ENCODE measurements at regions of chr9 and their contacts with region 1.

Region 1: GRCh38 chr9:116661037-116661954 is 25.8 kb upstream of the TRIM32 start:
- DNase-seq: peak; percentile 58
- H3K4me3 ChIP-seq: no peak overlapping the region
- H3K27ac ChIP-seq: no peak overlapping the region
- H3K4me1 ChIP-seq: no peaks in the 10 kb centered on the region
- H3K27me3 ChIP-seq: no peaks in the 10 kb centered on the region
- CTCF ChIP-seq: peak; percentile 51 to 59
- POLR2A ChIP-seq: no peak

Region 2: DNA sequence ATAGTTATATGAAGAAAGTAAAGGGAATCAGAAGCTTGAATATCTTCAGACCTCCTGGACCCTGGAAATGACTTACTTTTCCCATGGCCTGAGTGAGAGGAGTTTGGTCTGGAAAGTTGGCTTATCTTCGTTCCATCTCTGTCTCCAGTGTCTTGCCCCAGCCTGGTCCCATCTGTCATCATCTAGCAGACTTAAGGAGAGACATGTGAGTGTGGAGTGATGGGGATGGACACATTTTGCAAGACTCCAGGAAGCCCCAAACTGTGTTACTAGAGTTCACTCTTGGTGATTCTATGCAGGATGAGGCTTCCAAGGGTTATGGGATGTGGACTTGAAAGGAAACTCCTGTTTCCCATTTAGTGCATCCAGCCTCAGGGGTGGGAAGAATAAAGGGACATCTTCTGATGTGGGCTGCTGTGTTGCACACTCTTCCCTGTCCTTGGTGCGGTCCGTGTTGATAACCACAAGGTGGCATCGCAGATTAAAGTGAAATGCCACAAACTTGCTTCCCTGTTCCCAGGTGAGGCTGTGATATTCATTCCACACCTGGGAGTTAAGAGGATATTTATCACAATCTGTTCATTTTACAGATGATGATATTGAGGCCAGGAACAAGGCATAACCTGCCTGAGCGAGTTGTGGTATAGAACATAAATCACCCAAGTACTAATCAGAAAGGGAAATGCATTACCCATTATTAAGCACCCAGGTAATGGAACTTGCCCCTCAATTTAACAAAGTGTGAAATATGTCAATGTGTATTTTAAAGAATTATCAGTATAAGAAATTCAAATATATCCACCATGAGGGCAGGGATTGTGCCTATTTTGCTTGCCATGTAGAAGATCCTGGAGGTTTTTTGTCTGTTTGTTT is 777.6 kb before region 1 on chr9:
- CTCF ChIA-PET with region 1: no interaction called
- POLR2A ChIA-PET with region 1: no interaction called
- dilution Hi-C with region 1: no loop called
- intact Hi-C with region 1: loop called (anchors 5 kb)
- DNase-seq: peak; percentile 9
- H3K4me3 ChIP-seq: no peak overlapping the region
- H3K27ac ChIP-seq: no peak overlapping the region
- H3K4me1 ChIP-seq: no peaks in the 10 kb centered on the region
- H3K27me3 ChIP-seq: no peaks in the 10 kb centered on the region
- CTCF ChIP-seq: peak in 1 of 2 donors; percentile 15
- POLR2A ChIP-seq: no peak

Region 3: DNA sequence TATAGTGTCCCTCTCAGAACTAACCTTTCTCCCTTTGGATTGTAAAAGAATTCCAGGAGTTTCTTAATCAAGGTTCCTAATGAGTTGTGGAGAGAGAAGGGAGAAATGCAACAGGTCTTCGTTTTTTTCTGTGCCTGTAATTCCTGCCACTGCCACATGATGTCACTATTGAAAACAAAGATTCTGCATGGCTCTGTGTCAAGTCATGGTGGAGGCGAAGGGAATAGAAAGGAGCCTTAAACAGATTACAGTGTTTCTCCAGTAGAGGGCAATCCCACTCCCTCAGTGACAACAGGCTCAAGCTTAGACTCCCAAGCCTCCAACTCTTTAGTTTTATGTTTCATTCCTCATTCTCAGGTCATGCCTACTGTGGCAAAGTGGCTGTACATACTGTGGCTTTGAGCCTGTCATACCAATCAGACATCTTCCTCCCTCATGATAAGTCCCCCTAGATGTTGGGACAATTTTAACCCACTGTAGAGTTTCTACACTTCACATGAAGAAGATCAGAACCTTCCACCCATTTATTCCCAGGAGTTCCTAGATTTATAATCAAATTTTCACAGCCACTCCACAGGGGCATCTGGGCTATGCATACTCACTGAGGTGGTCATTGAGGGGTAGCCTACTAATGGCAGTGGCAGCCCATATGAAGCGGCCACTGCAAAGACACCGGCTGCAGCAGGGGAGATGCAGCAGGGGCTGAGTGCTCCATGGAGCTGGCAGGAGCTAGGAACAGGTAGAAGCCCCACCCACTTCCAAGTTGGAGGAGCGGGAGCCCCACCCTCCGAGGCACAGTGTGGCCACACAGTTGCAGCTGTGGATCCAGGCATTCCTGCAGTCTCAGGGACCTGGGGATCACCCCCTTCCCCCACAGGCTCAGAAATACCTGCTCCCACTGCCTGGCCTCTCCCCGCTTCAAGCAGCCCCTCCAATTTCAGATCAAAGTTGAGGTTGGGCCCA is 71.6 kb before region 1 on chr9:
- CTCF ChIA-PET with region 1: no interaction called
- POLR2A ChIA-PET with region 1: no interaction called
- dilution Hi-C with region 1: no loop called
- intact Hi-C with region 1: loop called (anchors 1 kb)
- DNase-seq: peak; percentile 21
- H3K4me3 ChIP-seq: no peak overlapping the region
- H3K27ac ChIP-seq: no peak overlapping the region
- H3K4me1 ChIP-seq: no peaks in the 10 kb centered on the region
- H3K27me3 ChIP-seq: no peaks in the 10 kb centered on the region
- CTCF ChIP-seq: peak; percentile 39 to 62
- POLR2A ChIP-seq: no peak